ENCODE measurements at regions of chr9 and their contacts with region 1.

Region 1: GRCh38 chr9:86354011-86354817 is at the start of gene TUT7:
- DNase-seq: peak; percentile 97
- ATAC-seq: peak; percentile 91
- H3K4me3 Mint-ChIP-seq: peak within 1 kb of the TSS; percentile 93
- H3K27ac Mint-ChIP-seq: peak within 1 kb of the TSS; percentile 99
- H3K4me1 Mint-ChIP-seq: peaks cover 26% of the 10 kb centered on the region
- H3K27me3 Mint-ChIP-seq: no peaks in the 10 kb centered on the region
- total RNA-seq, gene TUT7: 31.5 to 39.2 TPM

Region 2: GRCh38 chr9:85741875-85742629 is 612.2 kb before region 1 on chr9 and contains the start of gene AGTPBP1:
- CTCF ChIA-PET with region 1: no interaction called
- POLR2A ChIA-PET with region 1: no interaction called
- intact Hi-C with region 1: loop called (anchors 1 to 5 kb)
- DNase-seq: peak; percentile 99
- ATAC-seq: peak; percentile 83
- H3K4me3 Mint-ChIP-seq: peak within 1 kb of the TSS; percentile 86
- H3K27ac Mint-ChIP-seq: peak within 1 kb of the TSS; percentile 96
- H3K4me1 Mint-ChIP-seq: peaks cover 38% of the 10 kb centered on the region
- H3K27me3 Mint-ChIP-seq: peaks cover 3% of the 10 kb centered on the region
- total RNA-seq, gene AGTPBP1: 39.8 to 45.9 TPM

Region 3: GRCh38 chr9:86112057-86112456 is 242.2 kb before region 1 on chr9:
- CTCF ChIA-PET with region 1: no interaction called
- POLR2A ChIA-PET with region 1: no interaction called
- intact Hi-C with region 1: loop called in 1 of 2 experiments (anchors 2 kb)
- DNase-seq: no peak
- ATAC-seq: no peak
- H3K4me3 Mint-ChIP-seq: no peak overlapping the region
- H3K27ac Mint-ChIP-seq: no peak overlapping the region
- H3K4me1 Mint-ChIP-seq: peaks cover 1% of the 10 kb centered on the region
- H3K27me3 Mint-ChIP-seq: peaks cover 14% of the 10 kb centered on the region

Region 4: DNA sequence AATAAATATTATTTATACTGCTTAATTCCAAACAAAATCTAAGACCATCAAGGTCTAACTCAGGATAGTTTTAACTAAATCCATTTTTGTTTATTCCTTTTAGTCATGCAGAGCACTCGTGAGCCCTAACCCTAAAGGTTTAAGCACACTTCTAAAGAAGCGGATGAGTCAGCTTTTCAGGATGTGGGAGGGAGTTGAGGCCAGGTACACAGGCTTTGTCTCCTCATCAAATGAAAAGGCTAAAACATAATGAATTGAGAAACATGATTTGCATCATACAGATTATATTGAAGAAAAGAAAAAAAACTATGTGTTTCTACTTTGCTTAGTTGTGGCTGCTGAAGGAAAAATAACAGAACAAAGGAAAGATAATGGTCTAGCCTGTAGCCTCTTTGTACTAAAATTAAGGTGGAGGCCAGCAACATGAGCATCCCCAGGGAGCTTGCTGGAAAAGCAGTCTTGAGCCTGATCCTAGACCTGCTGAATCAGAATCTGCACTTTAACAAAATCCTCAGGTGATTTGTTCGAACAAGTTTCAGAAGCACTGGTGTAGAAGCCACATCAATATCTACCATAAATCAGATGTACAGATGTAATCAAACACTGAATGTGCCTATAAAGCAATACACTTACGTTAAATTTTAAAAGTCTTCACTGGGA is 50.8 kb before region 1 on chr9:
- CTCF ChIA-PET with region 1: interaction called, 3 read pairs
- POLR2A ChIA-PET with region 1: no interaction called
- intact Hi-C with region 1: loop called (anchors 1 to 5 kb)
- DNase-seq: peak; percentile 66
- ATAC-seq: peak; percentile 99
- H3K4me3 Mint-ChIP-seq: peak overlapping the region; percentile 17
- H3K27ac Mint-ChIP-seq: peak overlapping the region; percentile 93
- H3K4me1 Mint-ChIP-seq: peaks cover 28% of the 10 kb centered on the region
- H3K27me3 Mint-ChIP-seq: no peaks in the 10 kb centered on the region

Region 5: GRCh38 chr9:86405926-86406325 is 51.7 kb after region 1 on chr9:
- CTCF ChIA-PET with region 1: no interaction called
- POLR2A ChIA-PET with region 1: no interaction called
- intact Hi-C with region 1: loop called (anchors 1 to 5 kb)
- DNase-seq: peak; percentile 61
- ATAC-seq: peak; percentile 92
- H3K4me3 Mint-ChIP-seq: no peak overlapping the region
- H3K27ac Mint-ChIP-seq: no peak overlapping the region
- H3K4me1 Mint-ChIP-seq: peaks cover 32% of the 10 kb centered on the region
- H3K27me3 Mint-ChIP-seq: peaks cover 24% of the 10 kb centered on the region

Region 6: GRCh38 chr9:87464110-87464965 is 1110.1 kb after region 1 on chr9:
- CTCF ChIA-PET with region 1: no interaction called
- POLR2A ChIA-PET with region 1: no interaction called
- intact Hi-C with region 1: loop called in 1 of 2 experiments (anchors 5 kb)
- DNase-seq: peak; percentile 66
- ATAC-seq: peak; percentile 89
- H3K4me3 Mint-ChIP-seq: no peak overlapping the region
- H3K27ac Mint-ChIP-seq: peak overlapping the region; percentile 84
- H3K4me1 Mint-ChIP-seq: peaks cover 28% of the 10 kb centered on the region
- H3K27me3 Mint-ChIP-seq: peaks cover 2% of the 10 kb centered on the region

Measured in activated CD4-positive, alpha-beta T cell treated with anti-CD3 and anti-CD28 coated beads for 36 hours (primary cell).